ENCODE measurements at regions of chr4 and their contacts with region 1.

Region 1: DNA sequence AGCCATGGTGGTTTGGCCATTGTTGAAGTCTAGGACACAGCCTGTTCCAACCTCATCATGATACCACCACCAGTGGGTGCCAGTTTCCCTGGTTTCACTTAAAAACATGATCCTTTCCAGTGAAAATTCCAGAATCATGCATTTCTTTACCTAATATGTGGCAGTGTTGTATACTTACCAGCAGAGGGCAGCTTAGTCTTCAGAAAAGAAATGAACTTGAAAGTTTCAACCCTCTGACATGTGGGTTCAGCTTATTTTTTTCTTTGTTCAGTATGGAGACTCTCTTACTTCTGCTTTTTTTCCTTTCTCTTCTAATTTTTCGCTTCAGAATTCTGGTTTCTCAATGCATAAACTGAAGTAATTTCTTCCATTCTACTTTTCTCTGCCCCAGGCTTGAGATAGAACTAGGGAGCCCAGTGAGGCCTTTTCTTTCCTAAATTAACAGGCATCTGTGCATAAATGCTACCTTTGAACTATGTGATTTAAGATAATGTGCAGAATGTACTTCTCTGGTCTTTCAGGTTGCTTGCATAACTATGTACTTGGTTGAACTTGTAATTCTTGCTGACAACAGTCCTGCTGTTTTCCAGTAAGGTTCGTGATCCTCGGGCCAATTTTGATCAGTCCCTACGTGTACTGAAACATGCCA is 10.7 kb downstream of the LIAS start:
- DNase-seq: no peak
- H3K4me3 ChIP-seq: no peak overlapping the region
- H3K27ac ChIP-seq: peak overlapping the region; percentile 70
- H3K4me1 ChIP-seq: no peaks in the 10 kb centered on the region
- H3K27me3 ChIP-seq: no peaks in the 10 kb centered on the region
- CTCF ChIP-seq: peak; percentile 69 to 85 (median 74)
- POLR2A ChIP-seq: no peak

Region 2: DNA sequence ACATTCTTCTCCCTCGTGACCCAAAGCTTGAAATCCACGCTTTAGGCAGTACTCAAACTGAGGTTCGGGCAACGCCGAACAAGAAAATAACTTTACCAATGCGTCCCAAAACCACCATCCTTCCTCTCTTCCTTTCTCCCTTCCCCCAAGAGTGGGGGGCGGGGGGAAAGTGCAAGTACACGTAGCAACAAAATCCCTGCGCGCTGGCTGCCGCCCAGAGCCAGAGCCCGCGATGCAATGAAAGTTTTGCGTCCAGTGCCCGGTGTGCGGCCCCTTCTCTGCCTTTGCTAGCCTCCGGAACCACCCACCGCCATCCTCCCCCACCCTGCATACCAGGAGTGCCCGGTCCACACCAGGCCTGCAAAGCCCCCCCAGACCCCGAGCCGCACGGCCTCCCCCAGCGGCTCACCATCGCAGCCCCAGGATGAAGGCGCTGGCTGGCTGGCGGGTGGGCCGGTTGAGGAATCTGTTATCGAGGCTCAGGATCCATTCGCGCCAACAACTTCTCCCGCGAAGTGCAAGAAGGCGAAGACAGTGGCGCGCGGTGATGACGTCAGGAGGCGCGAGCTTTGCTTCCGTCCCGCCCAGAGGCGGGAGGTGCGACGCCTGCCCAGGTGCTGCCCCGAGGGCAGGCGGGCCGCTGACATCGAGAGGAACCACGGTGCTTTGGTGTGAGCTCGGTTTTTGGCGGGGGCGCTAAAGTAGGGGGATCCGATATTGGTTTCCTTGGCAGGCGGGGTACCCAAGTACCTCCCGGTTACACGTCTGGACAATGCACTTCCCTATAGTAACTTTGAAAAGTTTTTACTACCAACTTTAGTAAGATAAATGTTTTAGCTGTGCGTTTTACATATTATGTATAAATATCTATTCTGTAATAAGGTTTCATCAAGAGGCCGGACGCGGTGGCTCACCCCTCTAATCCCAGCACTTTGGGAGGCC is 103.5 kb before region 1 on chr4 and contains the start of gene RFC1:
- intact Hi-C with region 1: no loop called
- DNase-seq: peak in 1 of 2 donors; percentile 92
- H3K4me3 ChIP-seq: peak within 1 kb of the TSS; percentile 71 to 80
- H3K27ac ChIP-seq: peak within 1 kb of the TSS; percentile 81
- H3K4me1 ChIP-seq: peaks cover 15% of the 10 kb centered on the region
- H3K27me3 ChIP-seq: no peaks in the 10 kb centered on the region
- CTCF ChIP-seq: no peak
- POLR2A ChIP-seq: no peak
- total RNA-seq, gene RFC1: 33.9 TPM

Region 3: DNA sequence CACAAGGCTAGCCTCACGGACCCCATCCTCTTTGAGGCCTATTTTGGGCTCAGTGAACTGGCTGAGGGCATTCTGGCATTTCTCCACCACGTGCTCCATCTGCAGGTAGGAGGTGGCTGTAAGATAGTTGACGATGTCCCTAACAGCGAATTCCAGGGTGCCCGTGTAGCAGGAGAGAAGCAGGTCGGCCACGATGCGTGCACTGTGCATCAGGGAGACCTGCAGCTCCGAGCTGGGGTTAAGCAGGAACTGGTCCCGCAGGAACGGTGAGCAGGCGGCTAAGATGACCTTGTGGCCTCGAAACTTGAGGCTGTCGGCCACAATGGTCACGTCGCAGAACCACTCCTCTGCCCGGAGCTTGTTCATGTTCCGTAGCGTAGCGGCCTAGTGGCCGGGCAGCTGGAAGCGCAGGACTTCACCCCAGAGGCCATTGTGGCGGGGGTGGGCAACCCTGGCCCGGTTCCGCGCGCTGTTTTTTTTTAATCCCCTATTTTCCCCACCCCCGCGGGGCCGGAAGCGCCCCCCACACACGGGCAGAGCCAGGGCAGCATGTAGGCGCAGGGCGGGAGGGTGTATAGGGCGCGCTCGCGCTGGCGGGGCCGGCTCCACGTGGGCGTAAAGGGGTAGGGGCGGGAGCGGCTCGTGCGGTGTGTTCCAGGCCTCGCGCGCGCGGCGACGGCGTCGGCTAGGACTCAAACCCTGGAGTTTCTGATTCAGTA is 301.6 kb after region 1 on chr4:
- intact Hi-C with region 1: no loop called
- DNase-seq: no peak
- H3K4me3 ChIP-seq: no peak overlapping the region
- H3K27ac ChIP-seq: no peak overlapping the region
- H3K4me1 ChIP-seq: no peaks in the 10 kb centered on the region
- H3K27me3 ChIP-seq: no peaks in the 10 kb centered on the region
- CTCF ChIP-seq: no peak
- POLR2A ChIP-seq: no peak

Region 4: DNA sequence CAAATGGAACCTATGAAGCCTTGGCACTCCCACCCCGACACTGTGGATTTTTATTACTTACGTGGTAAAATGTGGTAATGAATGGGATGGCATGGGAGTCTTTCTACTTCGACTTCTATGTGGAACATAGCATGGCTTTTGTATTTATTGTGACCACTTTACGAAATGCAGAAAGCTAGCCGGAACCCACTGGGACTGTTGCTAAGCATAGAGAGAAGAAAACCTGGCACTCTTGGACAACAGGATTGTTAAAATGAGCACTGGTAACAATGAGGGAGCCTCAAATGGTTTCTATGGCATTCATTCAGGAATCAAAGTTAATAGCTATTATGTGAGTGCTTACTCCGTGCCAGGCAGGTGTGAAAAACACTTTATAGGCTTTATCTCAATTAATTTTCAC is 394.9 kb after region 1 on chr4:
- intact Hi-C with region 1: loop called (anchors 10 kb)
- DNase-seq: no peak
- H3K4me3 ChIP-seq: no peak overlapping the region
- H3K27ac ChIP-seq: no peak overlapping the region
- H3K4me1 ChIP-seq: no peaks in the 10 kb centered on the region
- H3K27me3 ChIP-seq: no peaks in the 10 kb centered on the region
- CTCF ChIP-seq: no peak
- POLR2A ChIP-seq: no peak